ENCODE measurements at regions of chr17 and their contacts with region 1.

Region 1: GRCh38 chr17:31487648-31488263 is 96.3 kb downstream of the RAB11FIP4 start:
- DNase-seq: peak; percentile 88 to 99 (median 93)
- ATAC-seq: peak; percentile 89
- H3K4me3 Mint-ChIP-seq: peak overlapping the region; percentile 85 to 92 (median 89)
- H3K27ac Mint-ChIP-seq: peak overlapping the region; percentile 85 to 97 (median 95)
- H3K4me1 Mint-ChIP-seq: peaks cover 38 to 54% (median 51%) of the 10 kb centered on the region in 4 donors
- H3K27me3 Mint-ChIP-seq: no peaks in the 10 kb centered on the region

Region 2: GRCh38 chr17:31497994-31498826 is 10.5 kb after region 1 on chr17:
- POLR2A ChIA-PET with region 1: interaction called, 13 read pairs
- DNase-seq: no peak
- ATAC-seq: no peak
- H3K4me3 Mint-ChIP-seq: peak overlapping the region in 2 of 10 donors; percentile 63 to 69
- H3K27ac Mint-ChIP-seq: peak overlapping the region; percentile 40 to 97 (median 94)
- H3K4me1 Mint-ChIP-seq: peaks cover 29 to 85% (median 79%) of the 10 kb centered on the region in 4 donors
- H3K27me3 Mint-ChIP-seq: no peaks in the 10 kb centered on the region

Region 3: GRCh38 chr17:31508288-31509094 is 20.7 kb after region 1 on chr17:
- POLR2A ChIA-PET with region 1: interaction called, 264 read pairs
- DNase-seq: peak; percentile 38 to 91 (median 78)
- ATAC-seq: peak; percentile 89 to 93
- H3K4me3 Mint-ChIP-seq: peak overlapping the region; percentile 82 to 97 (median 92)
- H3K27ac Mint-ChIP-seq: peak overlapping the region; percentile 96 to 100 (median 98)
- H3K4me1 Mint-ChIP-seq: peaks cover 37 to 85% (median 76%) of the 10 kb centered on the region in 4 donors
- H3K27me3 Mint-ChIP-seq: no peaks in the 10 kb centered on the region

Region 4: DNA sequence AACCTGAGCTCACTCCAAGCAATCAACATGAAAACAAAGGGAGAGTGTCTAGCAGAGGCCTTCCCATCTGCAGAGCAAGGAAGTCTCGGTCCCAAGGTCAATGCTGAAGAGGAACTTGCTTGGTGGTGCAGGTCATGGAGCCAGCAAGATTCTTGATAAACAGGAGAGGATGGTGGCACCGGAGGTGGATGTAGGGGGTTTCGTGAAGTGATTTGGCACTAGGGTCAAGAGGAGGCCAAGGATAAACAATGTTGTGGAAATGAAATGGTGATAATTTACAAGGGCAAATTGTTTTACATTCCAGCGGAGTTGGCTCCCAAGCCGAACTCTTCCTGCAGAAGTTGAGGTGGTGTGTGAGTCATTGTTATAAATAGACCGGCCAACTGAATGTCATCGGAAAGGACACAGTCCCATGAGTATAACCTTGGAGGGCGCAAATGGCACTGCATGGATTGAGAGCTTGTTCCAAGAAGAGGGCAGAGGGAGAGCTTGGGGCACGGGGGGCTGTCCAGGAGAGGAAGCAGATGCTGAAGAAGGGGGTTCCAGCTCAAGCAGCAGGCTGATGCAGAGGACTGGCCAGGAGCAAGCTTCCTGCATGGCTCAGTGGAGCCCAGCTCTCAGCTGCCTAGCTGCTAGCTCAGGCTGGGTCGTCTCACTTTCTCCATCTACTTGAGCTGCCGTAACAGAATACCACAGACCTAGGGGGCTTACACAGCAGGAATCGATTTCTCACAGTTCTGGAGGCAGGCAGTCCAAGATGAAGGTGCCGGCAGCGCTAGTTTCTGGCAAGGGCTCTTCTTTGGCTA is 234.7 kb after region 1 on chr17:
- POLR2A ChIA-PET with region 1: no interaction called
- DNase-seq: no peak
- ATAC-seq: no peak
- H3K4me3 Mint-ChIP-seq: no peak overlapping the region
- H3K27ac Mint-ChIP-seq: peak overlapping the region in 1 of 10 donors; percentile 20
- H3K4me1 Mint-ChIP-seq: no peaks in the 10 kb centered on the region
- H3K27me3 Mint-ChIP-seq: peaks cover 5 to 16% (median 9%) of the 10 kb centered on the region in 5 donors